ENCODE measurements at regions of chr17 and their contacts with region 1.

Region 1: DNA sequence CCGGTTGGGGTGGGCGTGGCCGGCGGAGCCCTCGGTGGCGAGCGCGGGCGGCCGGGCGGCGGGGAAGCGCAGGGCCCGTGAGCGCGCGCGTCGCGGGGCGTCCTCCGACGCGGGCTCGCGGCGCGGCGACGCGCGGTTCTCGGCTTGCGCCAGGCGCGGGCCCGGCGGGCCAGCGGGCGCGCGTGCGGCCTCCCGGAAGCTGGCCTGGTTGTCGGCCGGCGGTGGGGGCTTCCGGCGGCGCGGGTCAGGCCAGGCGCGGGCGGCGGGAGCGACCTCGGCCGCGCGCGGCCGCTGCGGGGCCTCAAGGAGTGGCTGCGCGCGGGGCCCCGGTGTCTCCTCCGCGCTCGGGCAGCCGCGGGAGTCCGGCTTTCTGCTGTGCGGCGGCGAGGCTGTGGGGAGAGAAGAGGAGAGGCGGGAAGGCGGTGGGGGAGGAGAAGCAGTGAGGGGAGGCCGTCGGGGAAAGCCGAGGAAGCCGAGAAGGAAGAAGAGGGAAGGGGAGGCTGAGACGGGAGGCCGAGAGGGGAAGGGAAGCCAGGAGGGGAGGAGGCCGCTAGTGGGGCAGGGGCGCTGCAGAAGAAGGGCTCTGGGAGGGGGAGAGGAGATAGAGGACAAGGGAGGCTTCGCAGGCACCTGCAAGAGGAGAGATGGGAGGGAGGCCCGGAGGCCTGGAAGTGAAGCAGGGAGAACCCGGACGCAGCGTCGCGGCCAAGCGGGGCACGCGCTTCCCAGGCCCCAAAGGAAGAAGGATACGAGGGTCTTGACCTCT is 2.5 kb downstream of the C17orf58 start:
- DNase-seq: peak in 1 of 2 donors; percentile 87
- ATAC-seq: peak; percentile 74 to 92 (median 80)
- H3K4me3 ChIP-seq: peak overlapping the region; percentile 79
- H3K4me3 Mint-ChIP-seq: peak overlapping the region; percentile 92
- H3K27ac ChIP-seq: peak overlapping the region; percentile 85
- H3K27ac Mint-ChIP-seq: peak overlapping the region; percentile 77 to 86
- H3K4me1 ChIP-seq: peaks cover 29% of the 10 kb centered on the region
- H3K4me1 Mint-ChIP-seq: peaks cover 35 to 38% of the 10 kb centered on the region in 2 donors
- H3K27me3 ChIP-seq: peaks cover 3% of the 10 kb centered on the region
- H3K27me3 Mint-ChIP-seq: peaks cover 5 to 23% of the 10 kb centered on the region in 2 donors
- CTCF ChIP-seq: no peak

Region 2: DNA sequence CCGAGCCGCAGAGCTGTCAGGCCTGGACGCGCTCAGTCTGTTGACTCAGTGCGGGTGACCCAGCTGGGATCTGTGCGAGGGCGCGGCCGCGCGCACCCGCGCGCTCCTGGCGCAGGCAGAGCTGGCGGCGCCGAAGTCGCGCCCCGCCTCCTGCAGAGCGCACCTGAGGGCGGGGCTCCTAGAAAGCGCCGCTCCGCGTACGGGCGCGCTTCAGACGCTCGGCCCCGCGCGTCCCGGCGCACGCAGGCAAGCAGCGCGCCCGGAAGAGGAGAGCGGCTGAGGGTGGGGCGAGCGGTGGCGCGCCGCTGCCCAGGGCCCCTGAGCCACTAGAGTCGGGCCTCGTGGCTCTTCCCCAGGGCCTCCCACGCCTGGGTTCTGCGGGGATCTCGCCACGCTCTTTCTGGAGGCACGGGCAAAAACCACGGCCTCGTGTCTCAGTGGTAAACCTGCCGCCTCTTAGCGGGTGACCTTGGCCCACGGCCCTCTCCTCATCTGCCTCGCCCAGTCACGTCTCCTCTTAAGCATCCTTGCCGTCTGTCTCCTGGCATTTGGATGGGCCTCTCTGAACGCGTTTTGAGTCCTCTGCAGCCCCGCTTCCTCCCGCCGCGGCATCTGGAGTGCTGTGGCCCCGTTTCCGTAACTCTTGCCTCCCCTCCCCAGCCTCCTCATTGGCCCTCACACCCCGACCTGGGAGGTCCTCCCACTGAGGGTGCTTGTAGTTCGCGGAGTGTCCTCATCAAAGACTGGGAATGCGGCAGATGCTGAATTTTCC is 1333.5 kb after region 1 on chr17 and contains the start of gene ABCA5:
- intact Hi-C with region 1: loop called (anchors 10 kb)
- DNase-seq: peak; percentile 81 to 97
- ATAC-seq: peak; percentile 93 to 99 (median 94)
- H3K4me3 ChIP-seq: peak within 1 kb of the TSS; percentile 94
- H3K4me3 Mint-ChIP-seq: peak within 1 kb of the TSS; percentile 95
- H3K27ac ChIP-seq: peak within 1 kb of the TSS; percentile 97
- H3K27ac Mint-ChIP-seq: peak within 1 kb of the TSS; percentile 78 to 99
- H3K4me1 ChIP-seq: peaks cover 13% of the 10 kb centered on the region
- H3K4me1 Mint-ChIP-seq: peaks cover 15 to 22% of the 10 kb centered on the region in 2 donors
- H3K27me3 ChIP-seq: peaks cover 14% of the 10 kb centered on the region
- H3K27me3 Mint-ChIP-seq: peaks cover 5 to 19% of the 10 kb centered on the region in 2 donors
- CTCF ChIP-seq: no peak
- total RNA-seq, gene ABCA5: 52.1 to 84.5 (median 57.6) TPM